Vagina (tissue), 2 donors: ENCODE measurements at regions of chr4 and their contacts with region 1.

Region 1: DNA sequence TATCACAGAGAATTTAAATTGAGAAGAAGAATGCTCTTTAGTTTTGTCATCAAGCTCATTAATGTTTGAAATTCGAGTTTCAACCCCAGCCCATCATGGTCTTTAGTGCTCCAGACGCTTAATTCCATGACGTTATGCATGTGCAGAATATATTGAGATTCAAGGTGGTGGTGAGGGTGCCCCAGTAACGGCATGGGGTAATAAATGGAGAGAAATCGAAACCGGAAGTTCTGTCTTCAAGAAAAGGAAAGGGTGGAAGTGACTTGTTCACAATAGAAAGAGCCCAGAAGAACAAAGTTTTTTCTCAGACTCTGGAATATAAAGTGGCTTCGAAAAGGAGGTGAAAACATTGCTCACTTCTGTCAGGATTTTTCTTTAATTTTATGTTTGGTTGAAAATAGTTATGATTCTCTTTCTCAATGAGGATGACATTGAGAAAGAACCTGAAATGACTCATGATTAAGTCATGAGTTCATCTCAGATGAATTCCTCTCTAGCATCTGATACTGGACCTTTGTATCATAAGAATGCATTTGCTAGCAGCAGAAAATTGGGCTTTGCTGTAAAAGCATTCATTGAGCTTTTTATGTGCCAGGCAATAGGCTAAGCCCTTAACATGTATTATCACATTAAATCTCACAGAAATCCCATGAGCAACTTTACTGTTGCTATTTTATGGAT is 779 bp upstream of the DDX60L start:
- DNase-seq: no peak
- H3K4me3 ChIP-seq: peak overlapping the region; percentile 80 to 94
- H3K27ac ChIP-seq: peak overlapping the region; percentile 99
- H3K4me1 ChIP-seq: peaks cover 23% of the 10 kb centered on the region
- H3K27me3 ChIP-seq: no peaks in the 10 kb centered on the region
- CTCF ChIP-seq: no peak
- POLR2A ChIP-seq: no peak

Region 2: DNA sequence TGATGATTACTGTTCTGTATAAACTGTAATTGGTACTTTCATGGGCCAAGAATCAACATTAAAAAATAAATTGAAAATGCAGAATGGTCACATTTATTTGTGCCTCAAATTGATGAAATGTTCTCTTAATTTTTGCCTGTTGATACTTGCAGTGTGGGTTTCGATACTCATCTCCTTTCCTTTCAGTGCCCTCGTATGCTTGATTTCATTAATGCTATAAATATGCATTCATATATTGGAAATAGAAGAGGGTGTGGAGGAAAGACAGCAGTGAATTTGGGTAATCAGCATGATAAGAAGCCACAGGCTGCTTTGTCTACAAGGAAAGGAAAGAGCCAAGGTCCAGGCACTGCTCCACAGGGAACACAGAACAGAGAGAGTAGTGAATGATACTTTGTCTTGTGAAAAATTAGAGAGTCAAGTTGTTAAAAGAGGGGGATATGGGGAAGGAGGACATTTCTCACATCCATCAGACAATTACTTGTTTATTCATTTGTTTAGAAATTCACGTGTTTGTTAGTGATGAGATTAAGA is 161.5 kb before region 1 on chr4:
- intact Hi-C with region 1: loop called (anchors 5 kb)
- DNase-seq: no peak
- H3K4me3 ChIP-seq: peak overlapping the region in 1 of 2 donors; percentile 90
- H3K27ac ChIP-seq: peak overlapping the region; percentile 98
- H3K4me1 ChIP-seq: peaks cover 18% of the 10 kb centered on the region
- H3K27me3 ChIP-seq: no peaks in the 10 kb centered on the region
- CTCF ChIP-seq: no peak
- POLR2A ChIP-seq: no peak